GM13977 (cell line): ENCODE measurements at regions of chr20 and their contacts with region 1.

Region 1: GRCh38 chr20:49853640-49854039 is 41.0 kb downstream of the SLC9A8 start:
- DNase-seq: no peak
- CTCF ChIP-seq: no peak

Region 2: DNA sequence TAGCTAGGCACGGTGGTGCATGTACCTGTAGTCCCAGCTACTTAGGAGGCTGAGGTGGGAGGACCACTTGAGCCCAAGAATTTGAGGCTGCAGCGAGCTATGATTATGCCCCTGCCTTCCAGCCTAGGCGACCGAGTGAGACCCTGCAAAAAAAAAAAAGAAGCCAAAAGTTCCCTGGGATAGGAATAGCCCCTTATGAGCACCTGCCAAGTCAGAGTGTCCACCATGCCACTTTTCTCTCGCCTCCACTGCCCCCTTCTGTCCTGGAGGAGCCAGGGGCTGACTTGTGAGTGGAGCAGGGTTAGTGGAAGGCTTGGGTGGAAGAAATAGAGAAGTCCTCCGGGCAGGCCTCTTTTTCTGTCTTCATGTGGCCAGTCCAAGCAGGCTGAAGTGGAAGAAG is 646.6 kb before region 1 on chr20:
- in situ Hi-C with region 1: no loop called
- DNase-seq: no peak
- CTCF ChIP-seq: peak; percentile 57

Region 3: DNA sequence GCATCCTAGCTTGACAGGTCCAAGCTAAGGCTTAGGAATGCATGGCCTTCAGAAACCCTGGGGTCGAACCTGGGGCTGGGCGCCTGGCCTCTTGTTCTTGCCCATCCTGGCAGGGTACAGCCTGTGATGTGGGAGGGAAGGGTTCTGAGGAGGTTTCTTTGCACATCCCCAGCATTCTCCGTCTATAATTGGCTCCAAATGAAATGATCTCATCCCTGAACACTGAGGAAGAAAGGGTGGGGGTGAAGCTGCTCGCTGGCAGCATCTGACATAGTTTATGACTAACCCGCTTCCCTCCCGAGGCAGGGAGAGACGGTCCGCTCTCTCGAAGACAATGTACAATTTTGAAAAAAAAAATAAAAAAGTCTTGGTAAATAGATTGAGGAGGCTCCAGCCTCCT is 508.7 kb before region 1 on chr20:
- in situ Hi-C with region 1: loop called (anchors 25 kb)
- DNase-seq: no peak
- CTCF ChIP-seq: no peak